ENCODE measurements at regions of chr2 and their contacts with region 1.

Region 1: GRCh38 chr2:191555092-191555742 is 122.7 kb upstream of the NABP1 start:
- DNase-seq: peak; percentile 93
- H3K4me3 Mint-ChIP-seq: no peak overlapping the region
- H3K27ac Mint-ChIP-seq: no peak overlapping the region
- H3K4me1 Mint-ChIP-seq: peaks cover 2% of the 10 kb centered on the region
- H3K27me3 Mint-ChIP-seq: no peaks in the 10 kb centered on the region

Region 2: GRCh38 chr2:191539068-191539467 is 16.1 kb before region 1 on chr2:
- CTCF ChIA-PET with region 1: interaction called, 16 read pairs
- intact Hi-C with region 1: no loop called
- DNase-seq: peak; percentile 66
- H3K4me3 Mint-ChIP-seq: no peak overlapping the region
- H3K27ac Mint-ChIP-seq: no peak overlapping the region
- H3K4me1 Mint-ChIP-seq: no peaks in the 10 kb centered on the region
- H3K27me3 Mint-ChIP-seq: no peaks in the 10 kb centered on the region

Region 3: GRCh38 chr2:191811807-191812602 is 256.8 kb after region 1 on chr2:
- CTCF ChIA-PET with region 1: interaction called, 14 read pairs
- intact Hi-C with region 1: loop called (anchors 1 kb)
- DNase-seq: peak; percentile 69
- H3K4me3 Mint-ChIP-seq: no peak overlapping the region
- H3K27ac Mint-ChIP-seq: no peak overlapping the region
- H3K4me1 Mint-ChIP-seq: no peaks in the 10 kb centered on the region
- H3K27me3 Mint-ChIP-seq: peaks cover 7% of the 10 kb centered on the region

Region 4: DNA sequence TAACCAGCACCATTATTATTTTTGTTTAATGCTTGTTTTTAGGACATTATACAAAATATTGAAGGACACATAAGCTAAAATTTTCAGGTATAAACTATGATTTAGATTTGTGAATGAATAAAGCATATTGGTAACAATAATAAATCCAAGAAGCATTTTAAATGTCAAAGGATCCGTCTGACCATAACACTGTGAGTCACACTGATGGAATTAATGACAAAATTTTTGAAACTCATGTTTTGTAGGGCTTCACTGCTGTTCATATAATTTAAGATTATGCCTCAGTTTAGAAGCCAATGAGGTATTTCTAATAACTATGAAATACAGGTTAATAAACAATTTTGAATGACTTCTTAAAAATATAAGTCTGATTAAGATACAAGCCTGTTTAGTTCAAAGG is 514.9 kb after region 1 on chr2:
- CTCF ChIA-PET with region 1: no interaction called
- intact Hi-C with region 1: loop called (anchors 10 kb)
- DNase-seq: no peak
- H3K4me3 Mint-ChIP-seq: no peak overlapping the region
- H3K27ac Mint-ChIP-seq: no peak overlapping the region
- H3K4me1 Mint-ChIP-seq: peaks cover 16% of the 10 kb centered on the region
- H3K27me3 Mint-ChIP-seq: no peaks in the 10 kb centered on the region